ENCODE measurements at regions of chr1 and their contacts with region 1.

Region 1: GRCh38 chr1:161792740-161793139 is 26.6 kb downstream of the ATF6 start:
- DNase-seq: no peak
- ATAC-seq: peak; percentile 51
- H3K4me3 Mint-ChIP-seq: no peak overlapping the region
- H3K27ac Mint-ChIP-seq: no peak overlapping the region
- H3K4me1 Mint-ChIP-seq: peaks cover 2% of the 10 kb centered on the region
- H3K27me3 Mint-ChIP-seq: no peaks in the 10 kb centered on the region

Region 2: DNA sequence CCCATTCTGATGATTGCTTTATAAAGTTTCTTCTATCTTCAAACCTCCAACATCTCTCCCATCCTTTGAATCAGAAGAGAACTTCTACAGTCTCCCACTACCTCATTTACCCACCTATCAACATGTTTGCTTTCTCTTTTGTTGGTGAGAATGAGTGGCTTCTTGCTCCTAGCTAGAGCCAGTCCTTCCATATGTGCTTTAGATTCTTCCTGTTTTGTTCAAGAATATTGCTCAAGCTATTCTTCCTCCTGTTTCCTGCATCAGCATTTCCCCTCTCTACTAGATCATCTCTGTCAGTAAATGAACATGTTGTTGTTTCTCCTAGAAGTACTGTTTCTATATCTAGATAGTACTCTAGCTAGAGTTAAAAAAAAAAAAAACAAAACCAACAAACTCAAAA is 20.3 kb before region 1 on chr1:
- CTCF ChIA-PET with region 1: interaction called, 16 read pairs
- POLR2A ChIA-PET with region 1: no interaction called
- DNase-seq: no peak
- ATAC-seq: no peak
- H3K4me3 Mint-ChIP-seq: no peak overlapping the region
- H3K27ac Mint-ChIP-seq: no peak overlapping the region
- H3K4me1 Mint-ChIP-seq: peaks cover 25% of the 10 kb centered on the region
- H3K27me3 Mint-ChIP-seq: no peaks in the 10 kb centered on the region

Region 3: DNA sequence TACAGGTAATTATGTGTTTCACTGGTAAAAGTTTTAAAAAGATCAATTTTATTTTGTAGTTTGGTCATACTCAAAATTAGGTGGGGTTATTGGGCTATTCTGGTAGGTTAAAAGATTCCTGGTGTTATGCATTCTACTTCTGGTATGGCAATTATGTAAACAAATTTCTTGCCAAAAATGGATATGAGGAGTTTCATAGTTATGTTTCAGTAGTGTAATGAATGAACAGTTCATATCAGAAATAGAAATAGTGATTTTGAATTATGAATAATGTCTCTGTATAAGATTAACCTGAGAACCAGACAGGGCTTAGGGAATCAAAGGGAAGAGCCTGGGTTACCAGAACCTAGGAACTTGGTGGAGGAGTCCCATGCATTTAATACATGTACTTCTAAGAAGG is 10.7 kb before region 1 on chr1:
- CTCF ChIA-PET with region 1: interaction called, 15 read pairs
- POLR2A ChIA-PET with region 1: no interaction called
- DNase-seq: no peak
- ATAC-seq: no peak
- H3K4me3 Mint-ChIP-seq: no peak overlapping the region
- H3K27ac Mint-ChIP-seq: no peak overlapping the region
- H3K4me1 Mint-ChIP-seq: no peaks in the 10 kb centered on the region
- H3K27me3 Mint-ChIP-seq: no peaks in the 10 kb centered on the region

Region 4: DNA sequence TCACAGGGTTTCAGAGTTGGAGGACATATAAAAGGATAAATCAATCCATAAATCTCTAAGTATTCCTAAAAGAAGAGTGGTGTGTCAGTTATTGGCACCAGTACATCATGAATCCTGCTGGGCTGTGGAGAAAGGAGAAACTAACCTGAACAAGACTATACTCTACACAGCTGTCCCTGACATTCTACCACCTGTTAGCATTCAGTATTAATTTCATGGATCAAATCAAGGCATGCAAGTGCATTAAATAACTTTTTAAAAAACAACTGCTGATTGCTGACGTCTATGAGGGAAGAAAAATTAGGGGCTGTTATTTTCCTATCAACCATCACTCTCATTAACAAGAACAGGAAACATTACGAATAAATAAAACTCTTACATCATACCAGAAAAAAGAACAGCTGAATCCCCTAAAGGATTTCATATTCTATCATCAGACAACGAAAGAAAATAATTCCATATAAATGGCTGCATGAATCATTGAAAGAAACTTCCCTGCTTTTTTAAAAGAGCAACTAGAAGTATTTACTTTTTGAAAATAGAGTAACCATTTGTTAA is 95.1 kb after region 1 on chr1:
- CTCF ChIA-PET with region 1: no interaction called
- POLR2A ChIA-PET with region 1: no interaction called
- DNase-seq: no peak
- ATAC-seq: no peak
- H3K4me3 Mint-ChIP-seq: no peak overlapping the region
- H3K27ac Mint-ChIP-seq: no peak overlapping the region
- H3K4me1 Mint-ChIP-seq: no peaks in the 10 kb centered on the region
- H3K27me3 Mint-ChIP-seq: no peaks in the 10 kb centered on the region

Region 5: DNA sequence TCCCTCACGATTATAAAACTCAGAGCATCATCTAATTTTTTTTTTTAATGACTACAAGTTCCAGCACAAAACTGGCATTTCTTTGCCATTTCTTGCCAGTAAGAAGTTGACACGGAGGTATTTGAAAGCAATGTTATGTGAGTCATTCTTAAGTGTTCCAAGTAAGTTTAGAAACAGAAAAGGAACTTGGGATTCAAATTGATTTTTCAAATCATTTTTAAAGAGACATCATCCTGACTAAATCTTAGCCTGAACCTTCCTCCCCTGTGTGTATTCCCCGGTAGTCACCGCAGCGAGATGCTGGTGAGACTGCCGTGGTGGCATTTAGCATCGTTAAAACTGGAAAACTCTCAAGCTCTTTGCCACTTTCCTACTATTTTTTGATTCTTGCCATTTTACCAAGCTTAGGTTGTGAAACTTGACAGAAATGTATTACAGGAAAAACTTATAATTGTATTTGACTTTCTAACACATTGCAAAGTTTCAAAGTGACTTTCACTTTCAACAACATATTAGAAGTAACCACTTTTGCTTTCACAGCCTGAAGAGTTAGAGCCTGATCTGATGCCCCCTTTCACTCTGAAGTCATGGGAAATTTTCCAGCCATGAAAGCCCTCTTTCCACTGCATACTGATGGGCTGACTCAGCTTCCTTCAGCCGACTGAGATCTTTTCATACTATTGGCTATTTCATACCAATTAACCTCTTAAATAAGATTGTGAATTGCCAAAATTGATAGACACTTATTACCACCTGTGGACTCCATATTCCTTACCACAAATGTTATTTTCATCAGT is 169.5 kb after region 1 on chr1:
- CTCF ChIA-PET with region 1: interaction called, 11 read pairs
- POLR2A ChIA-PET with region 1: no interaction called
- DNase-seq: peak; percentile 38
- ATAC-seq: peak; percentile 87
- H3K4me3 Mint-ChIP-seq: peak overlapping the region; percentile 78
- H3K27ac Mint-ChIP-seq: peak overlapping the region; percentile 90
- H3K4me1 Mint-ChIP-seq: peaks cover 20% of the 10 kb centered on the region
- H3K27me3 Mint-ChIP-seq: no peaks in the 10 kb centered on the region

Region 6: GRCh38 chr1:162023547-162024501 is 231.1 kb after region 1 on chr1 and contains the start of gene OLFML2B:
- CTCF ChIA-PET with region 1: interaction called, 23 read pairs
- POLR2A ChIA-PET with region 1: interaction called, 3 read pairs
- DNase-seq: peak; percentile 62
- ATAC-seq: peak; percentile 97
- H3K4me3 Mint-ChIP-seq: peak within 1 kb of the TSS; percentile 80
- H3K27ac Mint-ChIP-seq: no peak within 1 kb of the TSS
- H3K4me1 Mint-ChIP-seq: peaks cover 11% of the 10 kb centered on the region
- H3K27me3 Mint-ChIP-seq: peaks cover 46% of the 10 kb centered on the region
- total RNA-seq, gene OLFML2B: not detected

Region 7: GRCh38 chr1:162035241-162035640 is 242.5 kb after region 1 on chr1:
- CTCF ChIA-PET with region 1: interaction called, 193 read pairs
- POLR2A ChIA-PET with region 1: interaction called, 3 read pairs
- DNase-seq: no peak
- ATAC-seq: no peak
- H3K4me3 Mint-ChIP-seq: no peak overlapping the region
- H3K27ac Mint-ChIP-seq: no peak overlapping the region
- H3K4me1 Mint-ChIP-seq: peaks cover 4% of the 10 kb centered on the region
- H3K27me3 Mint-ChIP-seq: peaks cover 21% of the 10 kb centered on the region

Region 8: GRCh38 chr1:162040681-162041080 is 247.9 kb after region 1 on chr1:
- CTCF ChIA-PET with region 1: interaction called, 193 read pairs
- POLR2A ChIA-PET with region 1: interaction called, 3 read pairs
- DNase-seq: no peak
- ATAC-seq: no peak
- H3K4me3 Mint-ChIP-seq: no peak overlapping the region
- H3K27ac Mint-ChIP-seq: no peak overlapping the region
- H3K4me1 Mint-ChIP-seq: no peaks in the 10 kb centered on the region
- H3K27me3 Mint-ChIP-seq: peaks cover 10% of the 10 kb centered on the region